Right cardiac atrium (tissue), 5 donors: ENCODE measurements at regions of chr15 and their contacts with region 1.

Region 1: GRCh38 chr15:91706322-91707032 is 147.0 kb upstream of the SLCO3A1 start:
- DNase-seq: peak; percentile 78 to 80 (median 79)
- ATAC-seq: peak; percentile 85 to 87
- H3K4me3 ChIP-seq: no peak overlapping the region
- H3K27ac ChIP-seq: no peak overlapping the region
- H3K4me1 ChIP-seq: peaks cover 4% of the 10 kb centered on the region
- H3K27me3 ChIP-seq: no peaks in the 10 kb centered on the region

Region 2: GRCh38 chr15:91291673-91292072 is 414.8 kb before region 1 on chr15:
- intact Hi-C with region 1: loop called in 1 of 4 experiments (anchors 10 kb)
- DNase-seq: no peak
- ATAC-seq: peak in 1 of 2 donors; percentile 43
- H3K4me3 ChIP-seq: peak overlapping the region; percentile 8
- H3K27ac ChIP-seq: no peak overlapping the region
- H3K4me1 ChIP-seq: no peaks in the 10 kb centered on the region
- H3K27me3 ChIP-seq: no peaks in the 10 kb centered on the region

Region 3: DNA sequence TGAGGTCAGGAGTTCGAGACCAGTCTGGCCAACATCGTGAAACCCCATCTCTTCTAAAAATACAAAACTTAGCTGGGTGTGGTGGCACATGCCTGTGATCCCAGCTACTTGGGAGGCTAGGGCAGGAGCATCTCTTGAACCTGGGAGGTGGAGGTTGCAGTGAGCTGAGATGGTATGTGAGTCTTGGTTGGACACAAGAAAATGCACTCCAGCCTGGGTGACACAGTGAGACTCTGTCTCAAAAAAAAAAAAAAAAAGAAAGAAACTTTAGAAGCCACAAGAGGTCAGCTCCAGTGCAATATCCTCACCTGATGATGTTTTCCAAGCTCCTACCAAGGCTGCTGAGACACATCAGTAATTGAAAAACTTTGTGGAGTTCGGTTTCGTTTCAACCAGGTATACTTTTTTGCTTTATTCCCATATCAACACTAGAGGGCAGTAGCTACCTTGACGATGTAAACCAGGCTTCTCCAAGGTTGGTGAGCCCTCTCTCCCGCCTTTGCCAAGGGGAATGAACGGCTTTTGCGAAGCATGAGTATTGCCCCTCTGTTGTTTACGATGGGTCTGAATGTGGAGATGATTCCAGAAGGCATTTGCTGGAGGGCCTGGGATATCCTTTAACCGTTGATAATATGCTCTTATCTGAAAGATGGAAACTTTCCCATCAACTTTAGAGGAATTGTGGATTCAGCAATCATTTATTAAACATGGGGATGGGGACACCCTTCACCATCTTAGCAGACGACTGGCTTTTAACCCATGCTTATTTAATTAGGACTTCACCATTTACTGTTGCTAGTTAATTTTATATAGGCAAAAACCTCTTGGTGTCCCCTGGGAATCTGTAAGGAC is 403.7 kb before region 1 on chr15:
- intact Hi-C with region 1: loop called in 2 of 4 experiments (anchors 10 kb)
- DNase-seq: peak in 2 of 3 donors; percentile 39 to 50
- ATAC-seq: peak; percentile 77 to 88
- H3K4me3 ChIP-seq: no peak overlapping the region
- H3K27ac ChIP-seq: no peak overlapping the region
- H3K4me1 ChIP-seq: no peaks in the 10 kb centered on the region
- H3K27me3 ChIP-seq: no peaks in the 10 kb centered on the region

Region 4: DNA sequence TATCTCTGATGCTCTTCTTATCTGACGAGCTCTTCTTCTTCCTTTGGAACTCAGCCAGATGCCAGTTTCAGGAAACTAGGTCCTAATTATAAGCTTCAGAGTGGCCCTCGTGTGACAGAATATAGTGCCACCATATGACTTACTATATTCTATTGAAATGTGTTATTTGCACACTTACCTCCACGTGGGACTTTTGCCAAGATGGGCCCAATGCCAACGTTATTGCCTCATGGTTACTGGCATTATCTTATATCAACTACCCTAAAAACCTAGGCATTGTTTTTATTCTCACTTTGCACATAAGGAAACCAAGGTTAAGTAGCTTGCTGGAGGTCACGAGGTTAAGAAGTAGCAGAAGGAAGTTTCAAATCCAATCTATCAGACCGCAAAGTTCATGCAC is 75.7 kb after region 1 on chr15:
- intact Hi-C with region 1: no loop called
- DNase-seq: peak in 1 of 3 donors; percentile 43
- ATAC-seq: no peak
- H3K4me3 ChIP-seq: no peak overlapping the region
- H3K27ac ChIP-seq: no peak overlapping the region
- H3K4me1 ChIP-seq: peaks cover 5% of the 10 kb centered on the region
- H3K27me3 ChIP-seq: no peaks in the 10 kb centered on the region

Region 5: GRCh38 chr15:91852741-91853510 is 146.4 kb after region 1 on chr15:
- intact Hi-C with region 1: loop called in 3 of 4 experiments (anchors 5 to 10 kb)
- DNase-seq: peak; percentile 85 to 93 (median 92)
- ATAC-seq: peak; percentile 88 to 90
- H3K4me3 ChIP-seq: peak overlapping the region; percentile 81
- H3K27ac ChIP-seq: peak overlapping the region; percentile 94
- H3K4me1 ChIP-seq: peaks cover 22% of the 10 kb centered on the region
- H3K27me3 ChIP-seq: no peaks in the 10 kb centered on the region